ENCODE measurements at regions of chr12 and their contacts with region 1.

Region 1: DNA sequence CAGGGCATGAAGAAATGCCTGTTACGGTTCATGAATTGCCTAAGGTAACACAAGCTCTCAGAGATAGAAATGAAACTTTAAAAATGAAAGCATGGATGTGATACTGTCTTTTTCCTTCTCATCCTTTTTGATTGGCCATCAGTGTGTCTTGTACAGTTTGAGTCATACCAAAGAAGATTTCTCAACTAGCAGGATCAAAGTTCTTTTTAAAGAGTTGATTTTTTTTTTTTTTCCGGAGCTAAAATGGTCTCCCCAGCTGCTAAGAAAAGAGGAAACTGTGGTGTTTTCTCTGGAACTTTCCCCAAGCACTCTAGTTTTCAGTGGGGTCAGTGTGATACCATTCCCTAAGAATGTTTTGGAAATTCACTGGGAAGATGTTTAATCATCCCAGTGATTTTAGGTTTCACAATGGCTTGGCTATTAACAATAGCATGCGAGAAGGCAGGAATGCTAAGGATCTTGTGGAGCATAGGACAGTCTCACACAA is 105.0 kb downstream of the ETNK1 start:
- DNase-seq: no peak
- ATAC-seq: peak; percentile 84
- H3K4me3 ChIP-seq: no peak overlapping the region
- H3K27ac ChIP-seq: peak overlapping the region; percentile 89 to 91
- H3K4me1 ChIP-seq: peaks cover 4 to 9% of the 10 kb centered on the region in 2 donors
- H3K27me3 ChIP-seq: no peaks in the 10 kb centered on the region

Region 2: GRCh38 chr12:22684140-22685118 is 45.6 kb before region 1 on chr12:
- intact Hi-C with region 1: no loop called
- DNase-seq: no peak
- ATAC-seq: no peak
- H3K4me3 ChIP-seq: no peak overlapping the region
- H3K27ac ChIP-seq: no peak overlapping the region
- H3K4me1 ChIP-seq: peaks cover 0 to 7% of the 10 kb centered on the region in 2 donors
- H3K27me3 ChIP-seq: no peaks in the 10 kb centered on the region

Region 3: DNA sequence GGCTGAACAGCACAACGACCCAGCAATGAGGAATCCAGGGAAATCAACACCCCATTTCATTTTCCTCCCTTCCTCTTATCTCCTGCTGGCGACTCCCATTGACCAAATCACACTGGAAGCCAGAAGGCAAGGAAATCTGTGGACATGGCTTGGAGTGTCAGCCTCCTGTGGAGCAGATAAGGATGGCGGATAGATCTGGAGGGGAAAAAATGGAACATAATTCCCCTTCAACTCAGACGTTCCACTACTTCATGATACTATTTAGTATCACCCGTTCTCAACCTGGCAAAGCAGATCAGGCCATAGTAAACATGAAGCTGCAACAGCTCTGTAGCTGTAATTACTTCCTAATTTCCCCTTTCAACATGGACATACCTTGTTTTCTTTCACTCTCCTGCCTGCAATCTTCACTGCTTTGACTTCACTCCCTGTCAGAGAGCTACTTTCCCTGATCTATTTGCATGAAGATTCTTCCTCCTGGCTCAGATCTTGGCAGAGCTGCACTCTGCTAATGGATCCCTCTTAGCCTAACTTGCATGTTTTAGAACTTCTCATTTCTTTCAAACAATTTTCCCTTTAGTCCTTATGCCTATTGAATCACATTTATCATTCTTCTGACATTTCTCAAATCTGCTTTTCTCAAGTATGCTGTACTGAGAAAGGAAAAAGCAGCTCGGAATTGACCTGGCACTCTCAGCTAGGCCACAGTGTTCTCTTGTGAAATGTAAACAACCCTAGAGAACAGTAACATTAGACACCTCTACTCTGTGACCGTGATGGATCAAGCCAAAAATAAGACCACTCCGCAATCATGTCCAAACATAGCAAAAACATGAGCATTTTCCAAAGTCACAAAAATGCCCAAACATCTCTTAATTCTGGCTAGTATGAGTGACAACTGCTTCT is 30.0 kb after region 1 on chr12:
- intact Hi-C with region 1: loop called in 1 of 2 experiments (anchors 5 kb)
- DNase-seq: no peak
- ATAC-seq: peak; percentile 88
- H3K4me3 ChIP-seq: peak overlapping the region in 1 of 2 donors; percentile 41
- H3K27ac ChIP-seq: peak overlapping the region; percentile 100
- H3K4me1 ChIP-seq: peaks cover 6 to 7% of the 10 kb centered on the region in 2 donors
- H3K27me3 ChIP-seq: no peaks in the 10 kb centered on the region

Region 4: DNA sequence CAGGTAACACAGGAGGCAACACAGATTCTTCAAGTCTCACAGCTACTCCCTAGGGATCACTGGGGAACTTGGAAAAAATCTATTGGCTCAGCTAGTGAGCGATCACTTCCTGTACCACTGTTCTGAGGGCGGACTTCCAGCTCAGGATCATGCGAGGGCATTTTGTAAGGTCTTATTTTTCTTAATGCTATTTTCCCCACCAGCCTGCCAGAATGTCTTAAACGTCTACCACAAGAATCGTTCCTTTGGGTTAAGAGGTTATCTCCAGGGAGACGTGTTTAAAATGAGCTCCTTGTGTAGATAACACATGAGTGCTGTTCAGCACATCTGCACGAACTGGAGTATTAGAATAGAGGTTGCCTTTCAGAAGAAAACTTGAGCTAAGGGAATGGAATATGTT is 57.6 kb after region 1 on chr12:
- intact Hi-C with region 1: loop called (anchors 5 to 10 kb)
- DNase-seq: peak in 1 of 2 donors; percentile 68
- ATAC-seq: peak; percentile 75
- H3K4me3 ChIP-seq: no peak overlapping the region
- H3K27ac ChIP-seq: peak overlapping the region; percentile 82 to 100
- H3K4me1 ChIP-seq: peaks cover 0 to 6% of the 10 kb centered on the region in 2 donors
- H3K27me3 ChIP-seq: no peaks in the 10 kb centered on the region

Region 5: DNA sequence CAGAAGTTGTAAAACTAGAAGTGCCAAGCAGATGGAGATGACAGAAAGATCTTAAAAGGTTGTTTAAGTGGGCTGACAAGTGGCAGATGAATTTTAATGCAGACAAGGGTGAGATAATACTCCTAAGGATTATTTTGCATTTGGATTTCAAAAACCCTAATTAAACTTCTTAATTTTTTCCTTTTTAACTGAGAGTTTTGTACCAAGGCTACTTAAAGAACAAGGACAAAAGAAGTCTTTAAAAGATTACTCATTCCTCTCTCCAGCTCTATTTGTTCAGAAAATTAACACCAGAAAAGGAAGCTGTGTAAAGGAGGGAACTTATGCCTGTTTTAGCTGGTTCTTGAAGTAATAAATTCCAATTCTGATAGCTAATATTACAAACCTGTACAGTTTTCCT is 170.4 kb after region 1 on chr12:
- intact Hi-C with region 1: no loop called
- DNase-seq: no peak
- ATAC-seq: no peak
- H3K4me3 ChIP-seq: no peak overlapping the region
- H3K27ac ChIP-seq: no peak overlapping the region
- H3K4me1 ChIP-seq: no peaks in the 10 kb centered on the region
- H3K27me3 ChIP-seq: no peaks in the 10 kb centered on the region